Psoas muscle (tissue), 8 donors: ENCODE measurements at regions of chrX and their contacts with region 1.

Region 1: GRCh38 chrX:119729408-119730201 is 28.8 kb upstream of the SOWAHD start:
- DNase-seq: peak in 1 of 2 donors; percentile 40
- ATAC-seq: peak; percentile 37 to 62 (median 60)
- H3K4me3 ChIP-seq: no peak overlapping the region
- H3K27ac ChIP-seq: no peak overlapping the region
- H3K4me1 ChIP-seq: no peaks in the 10 kb centered on the region
- H3K27me3 ChIP-seq: peaks cover 0 to 3% (median 0%) of the 10 kb centered on the region in 3 donors
- CTCF ChIP-seq: peak; percentile 46

Region 2: GRCh38 chrX:118736394-118737010 is 993.1 kb before region 1 on chrX:
- intact Hi-C with region 1: no loop called
- DNase-seq: no peak
- ATAC-seq: no peak
- H3K4me3 ChIP-seq: no peak overlapping the region
- H3K27ac ChIP-seq: no peak overlapping the region
- H3K4me1 ChIP-seq: peaks cover under 1% of the 10 kb centered on the region
- H3K27me3 ChIP-seq: no peaks in the 10 kb centered on the region
- CTCF ChIP-seq: no peak

Region 3: GRCh38 chrX:119614776-119615175 is 114.8 kb before region 1 on chrX:
- intact Hi-C with region 1: loop called in 1 of 2 experiments (anchors 5 kb)
- DNase-seq: no peak
- ATAC-seq: no peak
- H3K4me3 ChIP-seq: no peak overlapping the region
- H3K27ac ChIP-seq: no peak overlapping the region
- H3K4me1 ChIP-seq: no peaks in the 10 kb centered on the region
- H3K27me3 ChIP-seq: no peaks in the 10 kb centered on the region
- CTCF ChIP-seq: no peak

Region 4: GRCh38 chrX:119682019-119682989 is 47.3 kb before region 1 on chrX:
- intact Hi-C with region 1: loop called in 1 of 2 experiments (anchors 5 kb)
- DNase-seq: no peak
- ATAC-seq: no peak
- H3K4me3 ChIP-seq: no peak overlapping the region
- H3K27ac ChIP-seq: no peak overlapping the region
- H3K4me1 ChIP-seq: no peaks in the 10 kb centered on the region
- H3K27me3 ChIP-seq: no peaks in the 10 kb centered on the region
- CTCF ChIP-seq: no peak